Heart right ventricle (tissue), 16 donors: ENCODE measurements at regions of chr18 and their contacts with region 1.

Region 1: GRCh38 chr18:28576941-28577340 is 400.0 kb upstream of the CDH2 start:
- DNase-seq: no peak
- ATAC-seq: no peak
- H3K4me3 ChIP-seq: no peak overlapping the region
- H3K27ac ChIP-seq: no peak overlapping the region
- H3K4me1 ChIP-seq: no peaks in the 10 kb centered on the region
- H3K27me3 ChIP-seq: no peaks in the 10 kb centered on the region
- CTCF ChIP-seq: no peak

Region 2: GRCh38 chr18:28637897-28638296 is 61.0 kb after region 1 on chr18:
- intact Hi-C with region 1: loop called in 1 of 10 experiments (anchors 10 kb)
- DNase-seq: no peak
- ATAC-seq: no peak
- H3K4me3 ChIP-seq: no peak overlapping the region
- H3K27ac ChIP-seq: no peak overlapping the region
- H3K4me1 ChIP-seq: no peaks in the 10 kb centered on the region
- H3K27me3 ChIP-seq: no peaks in the 10 kb centered on the region
- CTCF ChIP-seq: no peak